ENCODE measurements at regions of chr5 and their contacts with region 1.

Region 1: GRCh38 chr5:134527146-134527960 is 1.9 kb downstream of the JADE2 start:
- DNase-seq: peak; percentile 91
- ATAC-seq: peak; percentile 66
- H3K4me3 Mint-ChIP-seq: peak overlapping the region; percentile 88
- H3K27ac Mint-ChIP-seq: peak overlapping the region; percentile 94
- H3K4me1 Mint-ChIP-seq: peaks cover 55% of the 10 kb centered on the region
- H3K27me3 Mint-ChIP-seq: no peaks in the 10 kb centered on the region
- CTCF ChIP-seq: peak; percentile 89

Region 2: GRCh38 chr5:134411546-134412266 is 115.6 kb before region 1 on chr5 and contains the start of gene CDKN2AIPNL:
- CTCF ChIA-PET with region 1: interaction called, 20 read pairs
- POLR2A ChIA-PET with region 1: interaction called, 15 read pairs
- intact Hi-C with region 1: loop called (anchors 5 kb)
- DNase-seq: peak; percentile 94
- ATAC-seq: peak; percentile 99
- H3K4me3 Mint-ChIP-seq: peak within 1 kb of the TSS; percentile 97
- H3K27ac Mint-ChIP-seq: peak within 1 kb of the TSS; percentile 76
- H3K4me1 Mint-ChIP-seq: peaks cover 35% of the 10 kb centered on the region
- H3K27me3 Mint-ChIP-seq: no peaks in the 10 kb centered on the region
- CTCF ChIP-seq: peak; percentile 71
- total RNA-seq, gene CDKN2AIPNL: 38.2 to 41.1 TPM

Region 3: DNA sequence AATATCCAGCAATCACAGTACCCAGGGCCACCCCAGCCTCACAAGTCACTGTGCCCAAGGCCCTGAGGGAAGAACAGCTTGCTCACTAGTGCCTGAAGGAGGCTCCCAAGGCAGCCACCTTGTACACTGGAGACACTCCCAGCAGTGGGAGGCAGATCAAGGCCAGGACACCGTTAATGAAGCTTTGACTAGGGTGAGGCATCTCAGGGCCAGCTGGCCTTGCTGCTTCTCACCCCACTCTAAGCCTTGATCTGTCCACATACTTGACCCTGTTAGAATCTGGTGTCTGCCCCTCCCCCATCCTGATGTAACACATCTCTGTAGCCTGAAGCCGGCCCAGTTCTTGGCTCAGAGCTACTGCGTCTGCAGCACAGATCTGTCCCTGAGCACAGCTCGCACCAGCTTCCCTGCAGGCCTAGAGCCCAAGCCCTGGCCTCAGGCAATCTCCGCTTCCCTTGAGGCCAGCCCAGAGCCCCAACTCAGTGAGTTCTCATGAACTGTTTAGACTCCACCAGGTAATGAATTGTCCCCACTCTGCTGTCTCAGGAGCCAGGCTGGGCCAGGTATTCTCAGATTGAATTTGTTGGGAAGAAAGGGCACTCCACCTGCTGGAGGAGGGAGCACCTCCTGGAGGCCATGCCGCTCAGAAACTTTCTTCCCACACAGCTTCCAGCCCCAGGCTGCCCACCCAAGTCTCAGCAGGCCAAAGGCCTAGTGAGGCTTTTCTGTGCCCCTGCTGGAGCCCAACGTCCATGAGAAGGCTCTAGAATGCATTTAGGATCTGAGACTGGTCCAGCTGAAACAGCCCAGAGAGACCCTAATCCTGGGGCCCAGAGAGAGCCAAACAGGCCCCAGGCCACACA is 15.3 kb before region 1 on chr5:
- CTCF ChIA-PET with region 1: interaction called, 13 read pairs
- POLR2A ChIA-PET with region 1: interaction called, 25 read pairs
- intact Hi-C with region 1: no loop called
- DNase-seq: peak; percentile 29
- ATAC-seq: no peak
- H3K4me3 Mint-ChIP-seq: no peak overlapping the region
- H3K27ac Mint-ChIP-seq: peak overlapping the region; percentile 62
- H3K4me1 Mint-ChIP-seq: peaks cover 40% of the 10 kb centered on the region
- H3K27me3 Mint-ChIP-seq: no peaks in the 10 kb centered on the region
- CTCF ChIP-seq: no peak

Region 4: GRCh38 chr5:134555890-134556311 is 28.5 kb after region 1 on chr5:
- CTCF ChIA-PET with region 1: interaction called, 12 read pairs
- POLR2A ChIA-PET with region 1: interaction called, 16 read pairs
- intact Hi-C with region 1: no loop called
- DNase-seq: peak; percentile 98
- ATAC-seq: peak; percentile 97
- H3K4me3 Mint-ChIP-seq: peak overlapping the region; percentile 75
- H3K27ac Mint-ChIP-seq: peak overlapping the region; percentile 99
- H3K4me1 Mint-ChIP-seq: peaks cover 46% of the 10 kb centered on the region
- H3K27me3 Mint-ChIP-seq: no peaks in the 10 kb centered on the region
- CTCF ChIP-seq: no peak

Region 5: GRCh38 chr5:134798468-134798867 is 271.1 kb after region 1 on chr5:
- CTCF ChIA-PET with region 1: no interaction called
- POLR2A ChIA-PET with region 1: no interaction called
- intact Hi-C with region 1: no loop called
- DNase-seq: no peak
- ATAC-seq: no peak
- H3K4me3 Mint-ChIP-seq: no peak overlapping the region
- H3K27ac Mint-ChIP-seq: no peak overlapping the region
- H3K4me1 Mint-ChIP-seq: no peaks in the 10 kb centered on the region
- H3K27me3 Mint-ChIP-seq: no peaks in the 10 kb centered on the region
- CTCF ChIP-seq: no peak

Region 6: DNA sequence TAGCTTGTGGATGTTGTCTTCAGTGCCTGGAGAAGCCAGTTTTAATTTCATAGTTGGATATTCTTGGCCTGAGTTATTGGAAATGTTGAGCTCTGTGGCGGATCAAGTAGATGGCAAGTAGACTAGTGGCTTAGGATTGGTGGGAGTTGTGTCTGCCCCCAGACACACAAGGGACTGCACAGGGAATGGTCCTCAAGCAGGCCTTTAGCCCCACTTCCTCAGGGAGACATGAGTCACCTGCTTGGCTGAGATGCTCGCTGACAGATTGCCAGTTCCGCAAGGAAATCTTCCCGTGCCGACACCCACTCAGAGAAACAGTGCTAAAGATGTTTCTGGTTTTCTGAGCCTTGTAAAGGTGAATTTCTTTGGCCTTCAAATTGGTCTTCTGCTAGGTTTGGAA is 421.6 kb after region 1 on chr5:
- CTCF ChIA-PET with region 1: no interaction called
- POLR2A ChIA-PET with region 1: no interaction called
- intact Hi-C with region 1: no loop called
- DNase-seq: no peak
- ATAC-seq: no peak
- H3K4me3 Mint-ChIP-seq: no peak overlapping the region
- H3K27ac Mint-ChIP-seq: no peak overlapping the region
- H3K4me1 Mint-ChIP-seq: no peaks in the 10 kb centered on the region
- H3K27me3 Mint-ChIP-seq: no peaks in the 10 kb centered on the region
- CTCF ChIP-seq: no peak

Measured in activated CD8-positive, alpha-beta T cell treated with anti-CD3 and anti-CD28 coated beads for 36 hours (primary cell).